Activated CD8-positive, alpha-beta T cell treated with anti-CD3 and anti-CD28 coated beads, Interleukin-2, amount 10 ng/mL, durations not matched to agents 7 days and 5 days (primary cell): ENCODE measurements at regions of chr17 and their contacts with region 1.

Region 1: DNA sequence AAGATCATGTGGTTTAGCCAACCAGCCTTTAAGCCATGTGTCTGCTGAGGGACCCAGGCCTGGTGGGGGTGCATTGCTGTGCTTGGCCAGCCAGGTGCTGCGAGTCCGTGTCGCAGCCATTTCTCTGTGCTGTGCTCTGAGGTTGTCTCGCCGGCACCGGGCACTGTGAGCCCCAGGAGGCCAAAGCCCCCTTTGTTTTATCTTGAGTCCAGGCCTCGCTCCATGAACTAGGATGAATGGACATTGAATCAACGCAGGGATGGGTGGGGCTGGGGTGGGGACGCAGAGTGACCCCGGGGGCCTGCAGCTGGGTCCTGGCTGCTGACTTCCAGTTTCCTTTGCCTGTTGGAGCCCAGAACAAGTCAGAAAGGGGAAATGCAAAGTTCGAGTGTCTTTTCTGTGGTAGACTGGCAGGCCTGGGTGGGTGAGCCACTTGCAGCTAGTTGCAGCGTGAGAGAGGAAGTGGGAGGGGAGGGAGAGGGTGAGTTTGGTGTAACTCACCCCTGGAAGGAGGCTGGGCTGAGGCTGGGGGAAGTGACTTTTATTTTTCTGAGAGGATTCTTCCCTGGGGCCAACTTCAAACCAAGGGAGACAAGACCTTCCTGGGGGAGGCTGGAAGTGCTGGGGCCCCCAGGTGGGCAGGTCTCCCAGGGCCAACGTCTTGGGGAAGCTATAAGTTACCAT is 324.7 kb downstream of the SEC14L1 start:
- DNase-seq: peak; percentile 92
- ATAC-seq: peak; percentile 80
- H3K4me3 Mint-ChIP-seq: peak overlapping the region; percentile 63
- H3K27ac Mint-ChIP-seq: peak overlapping the region; percentile 91
- H3K4me1 Mint-ChIP-seq: peaks cover 90% of the 10 kb centered on the region
- H3K27me3 Mint-ChIP-seq: no peaks in the 10 kb centered on the region

Region 2: GRCh38 chr17:77451245-77451893 is 14.1 kb before region 1 on chr17:
- CTCF ChIA-PET with region 1: interaction called, 4 read pairs
- POLR2A ChIA-PET with region 1: interaction called, 49 read pairs
- DNase-seq: peak; percentile 82
- ATAC-seq: peak; percentile 62
- H3K4me3 Mint-ChIP-seq: peak overlapping the region; percentile 85
- H3K27ac Mint-ChIP-seq: peak overlapping the region; percentile 93
- H3K4me1 Mint-ChIP-seq: peaks cover 64% of the 10 kb centered on the region
- H3K27me3 Mint-ChIP-seq: no peaks in the 10 kb centered on the region

Region 3: GRCh38 chr17:77526728-77527350 is 61.3 kb after region 1 on chr17:
- CTCF ChIA-PET with region 1: no interaction called
- POLR2A ChIA-PET with region 1: no interaction called
- DNase-seq: no peak
- ATAC-seq: no peak
- H3K4me3 Mint-ChIP-seq: no peak overlapping the region
- H3K27ac Mint-ChIP-seq: no peak overlapping the region
- H3K4me1 Mint-ChIP-seq: peaks cover 3% of the 10 kb centered on the region
- H3K27me3 Mint-ChIP-seq: peaks cover 40% of the 10 kb centered on the region

Region 4: GRCh38 chr17:77555741-77556291 is 90.3 kb after region 1 on chr17:
- CTCF ChIA-PET with region 1: no interaction called
- POLR2A ChIA-PET with region 1: no interaction called
- DNase-seq: no peak
- ATAC-seq: no peak
- H3K4me3 Mint-ChIP-seq: no peak overlapping the region
- H3K27ac Mint-ChIP-seq: no peak overlapping the region
- H3K4me1 Mint-ChIP-seq: no peaks in the 10 kb centered on the region
- H3K27me3 Mint-ChIP-seq: peaks cover 17% of the 10 kb centered on the region